ENCODE measurements at regions of chr6 and their contacts with region 1.

Region 1: DNA sequence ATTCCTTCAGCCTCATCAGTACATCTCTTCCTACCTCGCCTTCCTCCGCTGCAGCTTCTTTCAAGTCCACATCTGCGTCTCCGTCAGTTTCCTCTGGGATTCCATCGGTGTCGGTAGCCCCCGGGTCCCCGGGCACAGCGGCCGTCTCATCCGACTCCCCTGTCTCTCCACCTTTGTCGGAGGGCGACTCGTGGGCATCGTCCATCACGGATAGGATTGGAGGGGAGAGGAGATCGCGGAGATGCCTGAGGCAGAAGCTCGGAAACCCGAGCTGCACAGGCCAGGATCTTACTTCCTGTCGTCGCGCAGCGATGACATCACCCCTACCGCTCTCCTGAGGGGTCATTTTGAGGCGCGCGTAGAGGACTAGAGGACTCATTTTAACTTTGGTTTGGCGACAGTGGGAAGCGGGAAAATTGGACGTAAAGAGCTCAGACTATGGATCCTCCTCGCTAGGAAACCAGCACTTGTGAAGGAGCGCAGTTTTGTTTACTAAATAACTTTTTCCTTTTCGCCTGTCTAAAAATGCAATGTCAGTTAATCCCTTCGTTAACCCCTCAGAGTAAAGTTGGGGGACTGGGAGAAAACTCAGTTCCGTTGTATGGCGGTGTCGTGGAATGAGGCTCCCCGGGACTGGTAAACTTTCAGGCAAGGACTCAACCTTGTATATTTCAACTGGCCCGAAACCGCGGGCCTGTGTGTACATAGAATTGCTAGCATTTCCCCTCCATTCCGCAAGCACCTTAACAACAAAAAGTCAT is at the start of gene TAF11:
- DNase-seq: peak; percentile 95
- H3K4me3 Mint-ChIP-seq: peak within 1 kb of the TSS; percentile 100
- H3K27ac Mint-ChIP-seq: peak within 1 kb of the TSS; percentile 98
- H3K4me1 Mint-ChIP-seq: peaks cover 43% of the 10 kb centered on the region
- H3K27me3 Mint-ChIP-seq: no peaks in the 10 kb centered on the region
- total RNA-seq, gene TAF11: 27.2 to 29.0 TPM

Region 2: GRCh38 chr6:34656378-34657036 is 231.4 kb before region 1 on chr6:
- CTCF ChIA-PET with region 1: no interaction called
- POLR2A ChIA-PET with region 1: no interaction called
- intact Hi-C with region 1: no loop called
- DNase-seq: peak; percentile 74
- H3K4me3 Mint-ChIP-seq: peak overlapping the region; percentile 67
- H3K27ac Mint-ChIP-seq: peak overlapping the region; percentile 93
- H3K4me1 Mint-ChIP-seq: peaks cover 54% of the 10 kb centered on the region
- H3K27me3 Mint-ChIP-seq: no peaks in the 10 kb centered on the region

Region 3: GRCh38 chr6:34791701-34792235 is 96.2 kb before region 1 on chr6 and contains the start of gene BLTP3A:
- CTCF ChIA-PET with region 1: interaction called, 8 read pairs
- POLR2A ChIA-PET with region 1: interaction called, 19 read pairs
- intact Hi-C with region 1: loop called (anchors 2 kb)
- DNase-seq: peak; percentile 82
- H3K4me3 Mint-ChIP-seq: peak within 1 kb of the TSS; percentile 91
- H3K27ac Mint-ChIP-seq: peak within 1 kb of the TSS; percentile 90
- H3K4me1 Mint-ChIP-seq: peaks cover 15% of the 10 kb centered on the region
- H3K27me3 Mint-ChIP-seq: no peaks in the 10 kb centered on the region
- total RNA-seq, gene BLTP3A: 14.1 to 14.6 TPM

Region 4: GRCh38 chr6:34858681-34859080 is 29.3 kb before region 1 on chr6:
- CTCF ChIA-PET with region 1: no interaction called
- POLR2A ChIA-PET with region 1: no interaction called
- intact Hi-C with region 1: no loop called
- DNase-seq: no peak
- H3K4me3 Mint-ChIP-seq: no peak overlapping the region
- H3K27ac Mint-ChIP-seq: no peak overlapping the region
- H3K4me1 Mint-ChIP-seq: no peaks in the 10 kb centered on the region
- H3K27me3 Mint-ChIP-seq: no peaks in the 10 kb centered on the region

Region 5: GRCh38 chr6:34912715-34913464 is 25.0 kb after region 1 on chr6:
- CTCF ChIA-PET with region 1: interaction called, 3 read pairs
- POLR2A ChIA-PET with region 1: interaction called, 3 read pairs
- intact Hi-C with region 1: loop called (anchors 1 kb)
- DNase-seq: peak; percentile 64
- H3K4me3 Mint-ChIP-seq: no peak overlapping the region
- H3K27ac Mint-ChIP-seq: peak overlapping the region; percentile 31
- H3K4me1 Mint-ChIP-seq: peaks cover 29% of the 10 kb centered on the region
- H3K27me3 Mint-ChIP-seq: peaks cover 2% of the 10 kb centered on the region

Measured in activated CD4-positive, alpha-beta memory T cell treated with anti-CD3 and anti-CD28 coated beads for 36 hours (primary cell).